Posterior cingulate gyrus (tissue), 11 donors: ENCODE measurements at regions of chr2 and their contacts with region 1.

Region 1: DNA sequence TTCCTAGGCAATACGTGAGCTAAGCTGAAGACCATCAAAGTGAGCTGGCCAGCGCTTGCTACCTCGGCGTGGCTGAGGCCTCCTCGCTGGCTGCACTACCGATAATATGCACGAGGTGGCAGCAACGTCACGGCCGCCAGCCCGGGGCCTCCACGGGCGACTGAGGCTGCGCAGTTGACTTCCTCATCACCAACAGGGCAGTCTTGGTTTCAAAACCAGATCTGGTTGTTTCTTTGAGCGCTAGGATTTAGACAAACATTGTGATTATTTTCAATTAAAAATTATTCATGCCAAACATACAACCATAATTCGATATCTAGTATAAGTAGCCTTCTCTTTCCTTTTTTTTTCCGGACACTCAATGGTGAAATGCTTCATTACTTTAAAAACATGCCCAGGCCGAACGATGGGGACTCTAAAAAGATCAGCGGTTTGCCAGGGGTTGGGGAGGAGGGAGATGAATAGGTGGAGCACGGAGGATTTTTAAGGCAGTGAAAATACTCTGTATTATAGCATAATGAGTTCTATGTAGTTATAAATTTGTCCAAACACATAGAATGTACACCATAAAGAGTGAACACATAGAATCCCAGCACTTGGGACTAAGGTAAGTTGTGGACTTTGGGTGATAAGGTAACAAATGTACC is 52.0 kb downstream of the CYBRD1 start:
- DNase-seq: peak; percentile 42 to 95 (median 74)

Region 2: GRCh38 chr2:172113617-172114016 is 539.3 kb after region 1 on chr2:
- intact Hi-C with region 1: loop called (anchors 2 kb)
- DNase-seq: no peak

Region 3: GRCh38 chr2:172465417-172466334 is 891.4 kb after region 1 on chr2:
- intact Hi-C with region 1: loop called (anchors 10 kb)
- DNase-seq: peak in 8 of 10 donors; percentile 54 to 88 (median 69)